ENCODE measurements at regions of chr3 and their contacts with region 1.

Region 1: DNA sequence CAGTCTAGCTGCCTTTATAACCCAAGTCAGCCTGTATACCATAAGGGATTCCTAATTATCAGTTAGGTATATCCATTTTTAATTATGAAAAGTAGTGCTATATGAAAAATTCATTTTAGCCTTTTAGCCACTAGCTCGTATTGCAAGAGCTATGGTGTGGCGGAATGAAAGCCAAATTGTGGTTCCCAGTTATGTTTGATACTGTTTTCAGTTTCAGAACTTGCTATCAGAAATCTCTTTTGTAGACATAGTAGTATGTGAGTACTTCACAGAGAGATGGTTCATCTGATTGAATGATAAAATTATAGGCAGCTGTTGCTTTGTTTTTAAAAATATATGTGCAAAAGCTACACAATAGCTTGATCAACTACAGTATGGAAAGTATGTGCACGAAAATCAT is 134.6 kb downstream of the SLC25A26 start:
- DNase-seq: no peak
- ATAC-seq: peak; percentile 22 to 62 (median 53)
- H3K4me3 ChIP-seq: no peak overlapping the region
- H3K4me3 Mint-ChIP-seq: peak overlapping the region; percentile 73
- H3K27ac ChIP-seq: peak overlapping the region; percentile 62
- H3K27ac Mint-ChIP-seq: peak overlapping the region; percentile 88 to 98
- H3K4me1 ChIP-seq: peaks cover 21% of the 10 kb centered on the region
- H3K4me1 Mint-ChIP-seq: peaks cover 40 to 42% of the 10 kb centered on the region in 2 donors
- H3K27me3 ChIP-seq: no peaks in the 10 kb centered on the region
- H3K27me3 Mint-ChIP-seq: no peaks in the 10 kb centered on the region
- CTCF ChIP-seq: no peak

Region 2: DNA sequence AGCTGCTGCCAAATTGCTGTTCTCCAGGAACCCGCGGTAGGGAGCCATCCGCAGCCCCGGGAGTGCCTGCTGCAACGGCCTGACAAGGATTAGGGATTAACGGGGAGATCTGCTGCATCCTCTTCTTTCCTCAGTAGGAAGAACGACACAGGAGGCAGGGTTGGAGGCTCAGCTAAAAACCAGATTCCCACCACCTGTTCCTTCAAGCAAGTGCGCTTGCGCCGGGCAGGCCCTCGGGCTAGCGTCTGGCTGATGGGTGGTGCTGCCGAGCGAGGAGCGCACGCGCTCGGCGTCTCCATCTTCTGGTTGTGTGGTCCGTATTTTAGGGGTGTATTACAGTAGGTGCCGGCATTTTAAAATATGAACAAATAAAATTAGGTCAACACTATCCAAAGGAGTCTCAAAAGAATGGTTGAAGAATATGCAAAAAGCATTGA is 160.0 kb before region 1 on chr3:
- intact Hi-C with region 1: no loop called
- DNase-seq: no peak
- ATAC-seq: no peak
- H3K4me3 ChIP-seq: no peak overlapping the region
- H3K4me3 Mint-ChIP-seq: no peak overlapping the region
- H3K27ac ChIP-seq: no peak overlapping the region
- H3K27ac Mint-ChIP-seq: no peak overlapping the region
- H3K4me1 ChIP-seq: no peaks in the 10 kb centered on the region
- H3K4me1 Mint-ChIP-seq: peaks cover 6 to 19% of the 10 kb centered on the region in 2 donors
- H3K27me3 ChIP-seq: no peaks in the 10 kb centered on the region
- H3K27me3 Mint-ChIP-seq: peaks cover 0 to 21% of the 10 kb centered on the region in 2 donors
- CTCF ChIP-seq: no peak

Region 3: GRCh38 chr3:66302288-66302687 is 53.1 kb before region 1 on chr3:
- intact Hi-C with region 1: loop called (anchors 1 kb)
- DNase-seq: peak in 1 of 2 donors; percentile 84
- ATAC-seq: peak; percentile 61 to 79 (median 70)
- H3K4me3 ChIP-seq: no peak overlapping the region
- H3K4me3 Mint-ChIP-seq: peak overlapping the region; percentile 55
- H3K27ac ChIP-seq: peak overlapping the region; percentile 100
- H3K27ac Mint-ChIP-seq: no peak overlapping the region
- H3K4me1 ChIP-seq: peaks cover 51% of the 10 kb centered on the region
- H3K4me1 Mint-ChIP-seq: peaks cover 17 to 22% of the 10 kb centered on the region in 2 donors
- H3K27me3 ChIP-seq: no peaks in the 10 kb centered on the region
- H3K27me3 Mint-ChIP-seq: no peaks in the 10 kb centered on the region
- CTCF ChIP-seq: no peak

Region 4: DNA sequence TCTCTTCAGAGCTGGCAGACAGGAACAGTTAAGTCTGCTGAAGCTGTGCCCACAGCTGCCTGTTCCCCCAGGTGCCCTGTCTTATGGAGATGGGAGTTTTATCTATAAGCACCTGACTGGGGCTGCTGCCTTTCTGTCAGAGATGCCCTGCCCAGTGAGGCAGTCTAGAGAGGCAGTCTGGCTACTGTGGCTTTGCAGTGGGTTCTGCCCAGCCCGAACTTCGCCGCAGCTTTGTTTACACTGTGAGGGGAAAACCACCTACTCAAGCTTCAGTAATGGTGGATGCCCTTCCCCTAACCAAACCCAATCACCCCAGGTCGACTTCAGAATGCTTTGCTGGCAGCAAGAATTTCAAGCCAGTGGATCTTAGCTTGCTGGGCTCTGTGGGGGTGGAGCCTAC is 43.4 kb before region 1 on chr3:
- intact Hi-C with region 1: loop called (anchors 1 kb)
- DNase-seq: peak; percentile 60 to 74
- ATAC-seq: peak; percentile 92 to 99 (median 96)
- H3K4me3 ChIP-seq: no peak overlapping the region
- H3K4me3 Mint-ChIP-seq: no peak overlapping the region
- H3K27ac ChIP-seq: peak overlapping the region; percentile 62
- H3K27ac Mint-ChIP-seq: no peak overlapping the region
- H3K4me1 ChIP-seq: peaks cover 15% of the 10 kb centered on the region
- H3K4me1 Mint-ChIP-seq: peaks cover 0 to 11% of the 10 kb centered on the region in 2 donors
- H3K27me3 ChIP-seq: no peaks in the 10 kb centered on the region
- H3K27me3 Mint-ChIP-seq: no peaks in the 10 kb centered on the region
- CTCF ChIP-seq: no peak

Measured in natural killer cell (primary cell).